ENCODE measurements at regions of chr1 and their contacts with region 1.

Region 1: GRCh38 chr1:56330391-56331026 is 248.9 kb downstream of the PLPP3 start:
- DNase-seq: peak; percentile 68
- ATAC-seq: peak; percentile 70
- H3K4me3 ChIP-seq: no peak overlapping the region
- H3K27ac ChIP-seq: no peak overlapping the region
- H3K4me1 ChIP-seq: no peaks in the 10 kb centered on the region; the same call in 1 of the 2 replicates
- H3K27me3 ChIP-seq: no peaks in the 10 kb centered on the region
- CTCF ChIP-seq: no peak
- EP300 ChIP-seq: peak; percentile 41 to 67; a peak in 2 of 4 replicates
- POLR2A ChIP-seq: no peak
- RAD21 ChIP-seq: no peak

Region 2: DNA sequence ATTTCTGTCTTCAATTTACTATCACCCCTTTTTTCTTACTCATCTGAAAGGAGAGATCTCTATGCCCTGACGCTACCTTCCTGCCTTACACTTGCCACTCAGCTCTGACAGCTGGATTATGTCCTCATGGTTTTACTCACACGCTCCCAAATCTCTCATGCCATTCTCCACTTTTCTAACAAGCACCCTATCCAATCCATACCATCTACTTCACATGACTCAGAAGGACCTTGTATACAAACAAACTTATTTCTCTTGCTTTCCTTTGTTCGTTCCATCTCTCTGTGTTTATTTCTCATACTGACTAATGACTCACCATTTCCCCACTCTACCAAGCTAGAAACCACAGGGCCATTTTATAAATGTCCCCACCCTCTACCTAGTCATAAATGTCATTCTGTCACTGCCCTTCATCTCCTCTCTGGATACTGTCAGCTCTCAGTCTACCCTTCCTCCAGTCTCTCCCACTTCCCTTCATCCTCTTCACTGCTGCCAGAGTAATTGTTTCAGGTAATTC is 1202.6 kb before region 1 on chr1:
- CTCF ChIA-PET with region 1: no interaction called
- POLR2A ChIA-PET with region 1: no interaction called
- RAD21 ChIA-PET with region 1: no interaction called
- SMC1A ChIA-PET with region 1: no interaction called
- in situ Hi-C with region 1: no loop called
- intact Hi-C with region 1: no loop called
- DNase-seq: peak; percentile 20
- ATAC-seq: peak; percentile 61
- H3K4me3 ChIP-seq: no peak overlapping the region
- H3K27ac ChIP-seq: peak overlapping the region; percentile 39; the same call in 1 of the 2 replicates
- H3K4me1 ChIP-seq: peaks cover 9% of the 10 kb centered on the region
- H3K27me3 ChIP-seq: no peaks in the 10 kb centered on the region
- CTCF ChIP-seq: no peak
- EP300 ChIP-seq: no peak
- POLR2A ChIP-seq: no peak
- RAD21 ChIP-seq: no peak

Region 3: DNA sequence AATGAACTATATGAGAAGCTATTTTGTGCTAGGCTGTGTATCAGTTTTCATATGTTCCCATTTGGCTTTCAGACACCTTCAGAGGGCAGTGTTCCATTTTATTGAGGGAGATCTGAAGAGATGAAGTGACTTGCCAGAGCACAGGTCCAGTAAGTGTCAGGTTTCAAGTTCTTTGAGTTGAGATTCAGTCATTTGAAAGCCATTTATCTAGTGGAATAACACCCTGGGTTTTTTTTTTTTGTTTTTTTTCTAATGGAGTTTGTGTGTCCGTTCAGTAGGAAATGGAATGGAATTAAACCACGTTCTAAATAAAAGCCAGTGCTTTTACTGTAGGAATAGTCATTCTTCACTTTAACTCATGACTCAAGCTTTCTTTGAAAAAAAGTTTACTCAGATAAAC is 462.5 kb before region 1 on chr1:
- CTCF ChIA-PET with region 1: no interaction called
- POLR2A ChIA-PET with region 1: no interaction called
- RAD21 ChIA-PET with region 1: no interaction called
- SMC1A ChIA-PET with region 1: interaction called, 3 read pairs
- in situ Hi-C with region 1: no loop called
- intact Hi-C with region 1: loop called (anchors 10 kb)
- DNase-seq: no peak
- ATAC-seq: no peak
- H3K4me3 ChIP-seq: no peak overlapping the region
- H3K27ac ChIP-seq: no peak overlapping the region
- H3K4me1 ChIP-seq: no peaks in the 10 kb centered on the region
- H3K27me3 ChIP-seq: no peaks in the 10 kb centered on the region; a peak in 1 of 4 replicates
- CTCF ChIP-seq: no peak; a peak in 1 of 6 replicates
- EP300 ChIP-seq: no peak
- POLR2A ChIP-seq: no peak
- RAD21 ChIP-seq: no peak

Region 4: GRCh38 chr1:56017336-56017735 is 313.2 kb before region 1 on chr1:
- CTCF ChIA-PET with region 1: no interaction called
- POLR2A ChIA-PET with region 1: no interaction called
- RAD21 ChIA-PET with region 1: no interaction called
- SMC1A ChIA-PET with region 1: no interaction called
- in situ Hi-C with region 1: no loop called
- intact Hi-C with region 1: no loop called
- DNase-seq: no peak
- ATAC-seq: no peak
- H3K4me3 ChIP-seq: no peak overlapping the region
- H3K27ac ChIP-seq: no peak overlapping the region
- H3K4me1 ChIP-seq: no peaks in the 10 kb centered on the region
- H3K27me3 ChIP-seq: no peaks in the 10 kb centered on the region
- CTCF ChIP-seq: no peak
- EP300 ChIP-seq: no peak
- POLR2A ChIP-seq: no peak
- RAD21 ChIP-seq: no peak

Region 5: DNA sequence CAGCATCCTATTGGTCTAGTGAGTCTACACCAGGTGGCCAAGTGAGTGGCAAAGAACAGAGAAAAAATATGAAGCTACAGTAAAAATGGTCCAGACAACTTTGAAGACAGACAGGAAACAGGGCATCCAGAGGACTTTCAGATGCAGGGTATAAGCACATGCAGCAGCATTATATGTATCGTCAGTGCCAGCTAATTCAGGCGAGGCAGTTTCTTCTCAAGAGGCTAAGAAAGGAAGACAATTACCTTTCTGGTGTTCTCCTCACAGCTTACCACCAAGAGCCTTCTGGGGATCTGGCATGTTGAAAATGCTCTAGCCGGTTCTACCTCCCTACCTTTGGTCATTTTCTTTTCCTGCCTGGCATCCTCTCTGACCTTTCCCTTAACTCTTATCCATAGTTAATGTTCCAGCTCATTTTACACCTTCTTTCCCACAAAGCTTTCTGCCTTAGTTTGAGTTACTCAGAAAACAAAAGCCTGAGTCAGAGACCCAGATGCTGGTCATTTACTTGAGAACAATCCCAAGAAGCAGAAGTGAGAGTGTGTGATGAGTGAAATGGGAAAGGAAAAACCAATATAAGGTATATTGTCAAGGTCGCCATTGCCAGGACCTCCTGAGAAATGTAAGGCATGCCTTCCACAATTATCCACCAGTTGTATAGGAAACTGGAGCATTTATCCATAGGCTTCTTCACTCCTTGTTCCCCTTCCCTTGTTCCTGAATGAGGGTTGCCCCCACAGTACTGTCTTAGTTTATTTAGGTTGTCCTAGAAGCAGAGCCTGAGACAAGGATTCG is 195.2 kb before region 1 on chr1:
- CTCF ChIA-PET with region 1: no interaction called
- POLR2A ChIA-PET with region 1: interaction called, 28 read pairs
- RAD21 ChIA-PET with region 1: interaction called, 71 read pairs
- SMC1A ChIA-PET with region 1: interaction called, 79 read pairs
- in situ Hi-C with region 1: no loop called
- intact Hi-C with region 1: loop called (anchors 2 kb)
- DNase-seq: no peak
- ATAC-seq: peak; percentile 67
- H3K4me3 ChIP-seq: no peak overlapping the region
- H3K27ac ChIP-seq: peak overlapping the region; percentile 56
- H3K4me1 ChIP-seq: peaks cover 25% of the 10 kb centered on the region
- H3K27me3 ChIP-seq: no peaks in the 10 kb centered on the region
- CTCF ChIP-seq: no peak
- EP300 ChIP-seq: peak in 1 of 2 experiments; percentile 87; a peak in 1 of 4 replicates
- POLR2A ChIP-seq: no peak
- RAD21 ChIP-seq: 0 out of 2 replicates have a peak, but pooled peaks have one; percentile 1

Region 6: GRCh38 chr1:56278061-56278460 is 52.4 kb before region 1 on chr1:
- CTCF ChIA-PET with region 1: interaction called, 3 read pairs
- POLR2A ChIA-PET with region 1: interaction called, 9 read pairs
- RAD21 ChIA-PET with region 1: interaction called, 21 read pairs
- SMC1A ChIA-PET with region 1: interaction called, 12 read pairs
- in situ Hi-C with region 1: no loop called
- intact Hi-C with region 1: no loop called
- DNase-seq: no peak
- ATAC-seq: peak; percentile 62
- H3K4me3 ChIP-seq: no peak overlapping the region
- H3K27ac ChIP-seq: no peak overlapping the region
- H3K4me1 ChIP-seq: no peaks in the 10 kb centered on the region
- H3K27me3 ChIP-seq: no peaks in the 10 kb centered on the region
- CTCF ChIP-seq: no peak
- EP300 ChIP-seq: peak in 1 of 2 experiments; percentile 62; a peak in 1 of 4 replicates
- POLR2A ChIP-seq: no peak
- RAD21 ChIP-seq: no peak

Region 7: GRCh38 chr1:56409094-56409691 is 78.7 kb after region 1 on chr1:
- CTCF ChIA-PET with region 1: interaction called, 10 read pairs
- POLR2A ChIA-PET with region 1: no interaction called
- RAD21 ChIA-PET with region 1: interaction called, 7 read pairs
- SMC1A ChIA-PET with region 1: interaction called, 46 read pairs
- in situ Hi-C with region 1: no loop called
- intact Hi-C with region 1: no loop called
- DNase-seq: no peak
- ATAC-seq: peak; percentile 79
- H3K4me3 ChIP-seq: no peak overlapping the region
- H3K27ac ChIP-seq: no peak overlapping the region
- H3K4me1 ChIP-seq: no peaks in the 10 kb centered on the region
- H3K27me3 ChIP-seq: no peaks in the 10 kb centered on the region
- CTCF ChIP-seq: peak; percentile 49 to 53 (median 52); a peak in 5 of 6 replicates
- EP300 ChIP-seq: no peak
- POLR2A ChIP-seq: no peak
- RAD21 ChIP-seq: peak; percentile 44

Region 8: GRCh38 chr1:56516539-56517252 is 186.2 kb after region 1 on chr1:
- CTCF ChIA-PET with region 1: no interaction called
- POLR2A ChIA-PET with region 1: interaction called, 5 read pairs
- RAD21 ChIA-PET with region 1: interaction called, 6 read pairs
- SMC1A ChIA-PET with region 1: interaction called, 14 read pairs
- in situ Hi-C with region 1: no loop called
- intact Hi-C with region 1: no loop called
- DNase-seq: peak; percentile 43
- ATAC-seq: peak; percentile 96
- H3K4me3 ChIP-seq: peak overlapping the region; percentile 14; the same call in 1 of the 2 replicates
- H3K27ac ChIP-seq: peak overlapping the region; percentile 45; the same call in 1 of the 2 replicates
- H3K4me1 ChIP-seq: peaks cover 32% of the 10 kb centered on the region
- H3K27me3 ChIP-seq: no peaks in the 10 kb centered on the region; a peak in 2 of 4 replicates
- CTCF ChIP-seq: no peak
- EP300 ChIP-seq: peak in 1 of 2 experiments; percentile 10; a peak in 1 of 4 replicates
- POLR2A ChIP-seq: peak; percentile 34; the same call in 1 of the 2 replicates
- RAD21 ChIP-seq: no peak

Region 9: DNA sequence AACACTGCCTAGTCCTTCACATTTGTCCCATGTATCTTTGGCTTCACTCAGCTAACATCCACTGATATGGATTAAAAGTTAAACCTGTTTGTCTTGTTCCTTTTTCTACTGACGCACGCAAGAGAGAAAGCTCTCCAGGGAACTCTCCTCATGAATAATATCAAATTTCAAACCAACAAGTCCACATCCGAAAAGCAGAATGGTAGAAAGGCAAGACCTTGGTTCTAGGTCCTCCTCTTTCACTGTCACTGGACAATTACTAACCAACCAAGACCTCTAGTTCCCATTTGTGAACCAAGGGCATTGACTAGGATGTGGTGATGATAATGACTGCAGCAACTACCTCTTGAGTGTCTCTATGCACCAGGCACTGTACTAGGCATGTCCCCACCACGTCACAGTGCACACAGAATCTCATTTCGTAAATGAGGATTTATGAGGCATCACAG is 240.4 kb after region 1 on chr1:
- CTCF ChIA-PET with region 1: interaction called, 39 read pairs
- POLR2A ChIA-PET with region 1: interaction called, 44 read pairs
- RAD21 ChIA-PET with region 1: interaction called, 167 read pairs
- SMC1A ChIA-PET with region 1: interaction called, 114 read pairs
- in situ Hi-C with region 1: loop called (anchors 5 kb)
- intact Hi-C with region 1: no loop called
- DNase-seq: no peak
- ATAC-seq: peak; percentile 33
- H3K4me3 ChIP-seq: no peak overlapping the region
- H3K27ac ChIP-seq: no peak overlapping the region
- H3K4me1 ChIP-seq: no peaks in the 10 kb centered on the region
- H3K27me3 ChIP-seq: peaks cover 0 to 3% of the 10 kb centered on the region in 2 experiments; a peak in 1 of 4 replicates
- CTCF ChIP-seq: no peak
- EP300 ChIP-seq: no peak
- POLR2A ChIP-seq: no peak
- RAD21 ChIP-seq: no peak